ENCODE measurements at regions of chr6 and their contacts with region 1.

Region 1: DNA sequence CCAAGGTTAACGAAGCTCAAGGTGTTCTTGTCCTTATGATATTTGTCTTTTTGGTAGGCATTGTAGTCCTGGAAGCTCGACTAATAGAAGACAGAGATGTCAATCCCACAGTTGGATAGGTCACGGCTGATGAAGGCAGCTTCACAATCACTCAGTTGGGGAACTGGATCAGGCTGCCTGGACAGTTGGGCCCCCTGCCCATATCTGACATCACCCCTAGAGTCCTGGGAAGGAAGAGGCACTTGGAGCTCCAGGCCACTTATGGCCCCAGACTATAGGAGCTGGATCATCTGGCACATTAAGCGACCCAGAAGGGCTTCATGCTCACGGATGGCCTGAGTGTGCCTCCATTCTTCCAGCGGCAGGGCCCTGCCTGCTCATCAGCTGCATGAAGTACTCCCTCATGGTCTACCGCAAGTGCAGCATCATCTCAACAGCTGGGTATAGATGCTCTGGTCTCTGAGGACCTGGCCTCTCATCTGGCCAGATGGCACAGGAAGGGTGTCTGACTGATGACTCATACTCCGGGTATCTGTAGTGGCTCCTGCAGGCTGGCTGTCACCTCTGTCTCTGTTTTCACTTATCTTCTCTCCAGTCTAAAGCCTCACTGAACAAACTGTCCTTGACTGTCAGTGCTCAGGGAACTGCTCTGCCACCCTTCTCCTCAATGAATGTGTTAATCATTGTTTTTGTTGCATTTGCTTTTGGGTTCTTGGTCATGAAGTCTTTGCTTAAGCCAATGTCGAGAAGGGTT is 29.2 kb upstream of the SSR1 start:
- DNase-seq: no peak
- H3K4me3 ChIP-seq: no peak overlapping the region
- H3K27ac ChIP-seq: no peak overlapping the region
- H3K4me1 ChIP-seq: no peaks in the 10 kb centered on the region
- CTCF ChIP-seq: no peak

Region 2: DNA sequence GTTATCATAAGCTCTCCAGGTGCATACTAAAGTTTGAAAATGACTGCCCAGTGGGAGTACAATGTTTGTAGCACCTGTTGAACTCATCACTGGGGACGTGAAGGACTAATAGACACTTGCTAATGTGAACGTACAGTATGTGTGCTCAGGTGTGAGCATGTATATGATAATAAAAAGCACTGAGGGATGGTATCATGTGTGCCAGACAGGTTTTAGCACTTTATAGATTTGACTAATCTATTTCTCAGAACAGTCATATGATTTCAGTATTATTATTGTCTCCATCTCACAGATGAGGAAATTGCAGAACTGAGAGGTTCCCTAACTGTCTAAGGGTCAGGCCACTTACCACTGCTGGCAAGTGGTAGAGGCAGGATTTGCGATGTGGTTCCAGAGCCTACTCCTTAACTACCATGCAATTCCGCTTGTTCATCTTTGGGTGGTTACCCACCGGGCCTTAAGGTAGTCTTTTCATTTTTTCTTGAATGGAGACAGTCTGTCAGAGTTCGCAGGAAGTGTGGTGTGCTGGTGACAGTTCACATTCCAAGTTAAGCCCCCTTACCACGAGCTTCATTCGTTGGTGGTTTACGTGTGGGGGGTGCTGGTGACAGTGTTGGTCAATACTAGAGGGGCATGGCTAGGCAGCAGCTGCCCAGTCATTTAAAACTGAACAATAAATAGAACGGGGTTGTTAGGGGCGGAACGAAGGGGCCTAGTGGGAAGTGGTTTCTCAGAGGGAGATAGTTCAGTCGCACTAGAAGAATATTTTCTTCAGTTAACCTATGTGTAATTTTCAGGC is 187.6 kb before region 1 on chr6:
- CTCF ChIA-PET with region 1: no interaction called
- POLR2A ChIA-PET with region 1: no interaction called
- intact Hi-C with region 1: no loop called
- DNase-seq: no peak
- H3K4me3 ChIP-seq: no peak overlapping the region
- H3K27ac ChIP-seq: no peak overlapping the region
- H3K4me1 ChIP-seq: peaks cover 26% of the 10 kb centered on the region
- CTCF ChIP-seq: no peak

Region 3: GRCh38 chr6:7276199-7276524 is 66.0 kb before region 1 on chr6:
- CTCF ChIA-PET with region 1: no interaction called
- POLR2A ChIA-PET with region 1: interaction called, 3 read pairs
- intact Hi-C with region 1: loop called (anchors 1 kb)
- DNase-seq: no peak
- H3K4me3 ChIP-seq: no peak overlapping the region
- H3K27ac ChIP-seq: no peak overlapping the region
- H3K4me1 ChIP-seq: peaks cover 26% of the 10 kb centered on the region
- CTCF ChIP-seq: 0 out of 2 replicates have a peak, but pooled peaks have one; percentile 1

Region 4: GRCh38 chr6:7324520-7324919 is 17.6 kb before region 1 on chr6:
- CTCF ChIA-PET with region 1: no interaction called
- POLR2A ChIA-PET with region 1: interaction called, 12 read pairs
- intact Hi-C with region 1: no loop called
- DNase-seq: no peak
- H3K4me3 ChIP-seq: no peak overlapping the region
- H3K27ac ChIP-seq: no peak overlapping the region
- H3K4me1 ChIP-seq: peaks cover 7% of the 10 kb centered on the region
- CTCF ChIP-seq: no peak